ENCODE measurements at regions of chr17 and their contacts with region 1.

Region 1: GRCh38 chr17:32429598-32429997 is 14.7 kb upstream of the PSMD11 start:
- DNase-seq: no peak
- H3K4me3 ChIP-seq: no peak overlapping the region
- H3K27me3 ChIP-seq: no peaks in the 10 kb centered on the region
- CTCF ChIP-seq: no peak

Region 2: DNA sequence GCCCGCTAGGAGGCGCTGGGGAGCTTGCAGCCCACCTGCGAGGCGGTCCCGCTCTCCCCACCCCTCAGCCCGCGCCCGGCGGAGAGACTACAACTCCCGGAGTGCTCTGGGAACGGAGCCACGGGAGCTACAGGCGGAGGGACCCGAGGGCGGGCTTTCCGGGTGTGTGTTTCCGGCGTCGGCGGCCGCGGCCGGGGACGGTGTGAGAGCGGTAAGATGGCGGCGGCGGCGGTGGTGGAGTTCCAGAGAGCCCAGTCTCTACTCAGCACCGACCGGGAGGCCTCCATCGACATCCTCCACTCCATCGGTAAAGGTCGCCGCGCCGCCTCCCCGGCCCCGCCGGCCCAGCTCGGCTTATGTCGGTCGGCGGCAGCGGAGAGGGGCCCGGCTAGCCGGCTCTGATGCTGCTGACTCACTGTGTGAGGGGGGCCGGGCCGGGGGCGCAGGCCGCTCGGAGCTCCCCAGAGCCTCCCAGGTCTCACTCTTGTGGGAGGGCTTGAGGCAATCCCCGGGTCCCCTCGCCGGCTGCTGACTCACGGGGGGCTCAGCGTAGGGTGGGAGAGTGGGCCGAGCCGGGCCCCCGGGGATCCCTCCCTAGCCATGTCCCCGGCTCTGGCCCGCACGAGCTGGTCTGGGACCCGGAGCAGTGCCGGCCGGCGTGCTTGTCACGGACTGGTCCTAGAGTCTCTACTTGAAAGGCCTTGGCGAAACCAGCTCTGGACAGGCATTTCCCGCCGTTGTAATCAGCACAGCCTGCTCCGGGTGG is 14.9 kb after region 1 on chr17 and contains the start of gene PSMD11:
- CTCF ChIA-PET with region 1: interaction called, 43 read pairs
- POLR2A ChIA-PET with region 1: no interaction called
- DNase-seq: peak; percentile 70
- H3K4me3 ChIP-seq: peak within 1 kb of the TSS; percentile 97
- H3K27me3 ChIP-seq: no peaks in the 10 kb centered on the region
- CTCF ChIP-seq: peak; percentile 98
- polyA plus RNA-seq, gene PSMD11: 71.6 and 73.5 TPM in 2 replicates

Measured in BJ (cell line).